ENCODE measurements at regions of chr21 and their contacts with region 1.

Region 1: DNA sequence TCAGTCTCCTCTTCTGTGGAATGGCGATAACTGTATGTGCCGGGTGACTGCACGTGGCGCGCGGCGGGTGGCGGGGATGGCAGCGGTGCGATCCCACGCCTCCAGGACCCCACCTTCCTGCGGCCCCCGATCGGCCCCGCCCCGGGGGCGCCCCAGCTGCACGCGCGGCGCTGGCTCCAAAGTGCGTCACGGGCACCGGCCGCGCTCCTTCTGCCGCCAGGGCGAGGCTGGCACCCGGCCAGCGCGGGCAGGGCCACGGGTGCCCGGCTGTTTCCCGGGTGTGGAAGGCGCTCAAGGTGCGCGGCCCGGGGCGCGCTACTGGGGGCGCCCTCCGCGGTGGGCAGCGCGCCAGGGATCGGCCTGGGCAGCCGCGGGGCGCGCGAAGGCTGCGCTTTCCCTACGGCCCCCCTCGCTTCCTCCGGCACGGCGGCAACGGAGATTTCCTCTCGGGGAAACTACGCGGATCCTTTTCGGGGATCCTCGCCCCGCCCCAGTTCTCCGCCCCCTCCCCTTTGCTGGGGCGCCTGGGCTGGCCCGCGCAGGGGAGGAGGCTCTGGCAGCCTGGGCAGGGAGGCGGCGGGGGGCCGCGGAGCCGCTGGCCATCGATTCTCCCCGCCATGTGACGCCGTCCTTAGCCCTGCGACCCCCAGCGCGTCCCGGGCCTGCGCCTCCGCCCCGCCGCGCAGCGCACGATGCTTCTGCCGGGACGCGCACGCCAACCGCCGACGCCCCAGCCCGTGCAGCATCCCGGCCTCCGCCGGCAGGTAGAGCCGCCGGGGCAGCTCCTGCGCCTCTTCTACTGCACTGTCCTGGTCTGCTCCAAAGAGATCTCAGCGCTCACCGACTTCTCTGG is at the start of gene EVA1C:
- DNase-seq: peak; percentile 75 to 86 (median 82)
- ATAC-seq: peak; percentile 29 to 78 (median 60)
- H3K4me3 ChIP-seq: peak within 1 kb of the TSS; percentile 36 to 95 (median 76)
- H3K27ac ChIP-seq: peak within 1 kb of the TSS; percentile 94 to 100 (median 99)
- H3K4me1 ChIP-seq: peaks cover 12 to 64% (median 39%) of the 10 kb centered on the region in 12 donors
- H3K27me3 ChIP-seq: no peaks in the 10 kb centered on the region
- CTCF ChIP-seq: peak in 8 of 12 donors; percentile 9 to 51 (median 28)
- POLR2A ChIP-seq: peak in 1 of 2 donors; percentile 33
- total RNA-seq, gene EVA1C: 10.1 to 44.4 (median 19.7) TPM

Region 2: DNA sequence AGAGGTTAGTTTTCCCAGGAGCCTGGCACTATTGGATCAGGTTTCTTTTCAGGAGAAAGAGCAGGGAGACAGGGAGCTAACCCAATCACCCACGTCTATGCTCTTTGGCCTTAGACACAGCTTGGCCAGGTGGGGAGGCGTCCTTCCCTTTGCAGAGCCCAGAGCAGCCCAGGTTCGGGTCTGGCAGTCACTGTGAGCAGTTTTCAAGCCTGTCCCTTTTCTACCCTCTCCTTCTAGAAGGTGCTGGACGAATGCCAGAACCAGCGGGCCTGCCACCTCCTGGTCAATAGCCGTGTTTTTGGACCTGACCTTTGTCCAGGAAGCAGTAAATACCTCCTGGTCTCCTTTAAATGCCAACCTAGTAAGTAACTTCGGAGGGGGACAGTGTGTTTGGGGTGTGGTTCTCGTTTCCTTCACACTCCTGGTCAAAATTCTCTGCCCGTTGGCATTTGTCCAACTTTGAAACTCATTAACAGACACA is 45.0 kb after region 1 on chr21:
- intact Hi-C with region 1: loop called in 7 of 10 experiments (anchors 2 to 10 kb)
- DNase-seq: peak; percentile 41 to 71 (median 52)
- ATAC-seq: peak in 3 of 4 donors; percentile 40 to 52 (median 45)
- H3K4me3 ChIP-seq: no peak overlapping the region
- H3K27ac ChIP-seq: peak overlapping the region; percentile 11 to 78 (median 60)
- H3K4me1 ChIP-seq: peaks cover 9 to 36% (median 20%) of the 10 kb centered on the region in 12 donors
- H3K27me3 ChIP-seq: no peaks in the 10 kb centered on the region
- CTCF ChIP-seq: peak in 6 of 12 donors; percentile 11 to 38 (median 15)
- POLR2A ChIP-seq: no peak

Region 3: DNA sequence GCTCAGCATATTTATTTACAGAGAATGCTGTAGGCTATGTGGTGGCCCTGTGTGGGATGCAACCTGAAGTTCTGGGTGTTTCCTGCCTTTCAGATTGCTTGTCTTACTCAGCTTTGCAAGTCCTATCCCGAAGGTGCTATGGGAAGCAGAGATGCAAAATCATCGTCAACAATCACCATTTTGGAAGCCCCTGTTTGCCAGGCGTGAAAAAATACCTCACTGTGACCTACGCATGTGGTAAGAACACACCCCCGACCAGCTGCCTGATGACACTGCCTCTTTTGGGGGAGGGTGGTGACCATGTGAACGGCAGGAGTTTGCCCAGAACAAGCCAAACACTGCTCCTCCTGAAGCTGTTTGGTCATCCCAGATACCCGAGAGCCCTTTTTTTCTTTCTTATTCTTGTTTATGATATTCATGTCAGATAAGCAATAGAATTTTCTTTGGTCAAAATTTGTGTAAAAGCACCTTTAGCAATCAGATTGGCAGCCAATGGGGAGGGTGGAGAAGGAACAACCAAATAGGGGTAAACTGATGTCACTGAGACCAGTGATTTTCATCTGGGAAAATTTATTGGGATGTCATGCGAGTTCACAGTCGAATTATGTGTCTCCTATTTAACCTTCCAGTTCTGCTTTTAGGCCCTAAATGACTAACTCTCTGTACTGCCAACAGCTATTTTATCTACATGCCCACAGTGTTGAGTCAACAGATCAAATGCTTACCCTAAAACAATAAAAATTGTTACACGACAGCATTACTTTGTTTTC is 82.7 kb after region 1 on chr21:
- intact Hi-C with region 1: loop called in 5 of 10 experiments (anchors 5 to 10 kb)
- DNase-seq: no peak
- ATAC-seq: no peak
- H3K4me3 ChIP-seq: no peak overlapping the region
- H3K27ac ChIP-seq: peak overlapping the region in 3 of 12 donors; percentile 8 to 55 (median 49)
- H3K4me1 ChIP-seq: peaks cover 6 to 53% (median 33%) of the 10 kb centered on the region in 12 donors
- H3K27me3 ChIP-seq: no peaks in the 10 kb centered on the region
- CTCF ChIP-seq: no peak
- POLR2A ChIP-seq: no peak

Region 4: GRCh38 chr21:32562426-32562825 is 150.0 kb after region 1 on chr21:
- intact Hi-C with region 1: loop called in 3 of 10 experiments (anchors 2 to 5 kb)
- DNase-seq: peak in 4 of 5 donors; percentile 58 to 62 (median 60)
- ATAC-seq: peak; percentile 55 to 84 (median 66)
- H3K4me3 ChIP-seq: no peak overlapping the region
- H3K27ac ChIP-seq: peak overlapping the region in 9 of 12 donors; percentile 5 to 70 (median 56)
- H3K4me1 ChIP-seq: peaks cover 0 to 11% (median 1%) of the 10 kb centered on the region in 12 donors
- H3K27me3 ChIP-seq: no peaks in the 10 kb centered on the region
- CTCF ChIP-seq: peak; percentile 37 to 81 (median 58)
- POLR2A ChIP-seq: no peak

Region 5: GRCh38 chr21:32612075-32612998 is 199.9 kb after region 1 on chr21 and contains the start of gene CFAP298:
- intact Hi-C with region 1: loop called in 1 of 10 experiments (anchors 5 kb)
- DNase-seq: peak; percentile 89 to 92 (median 89)
- ATAC-seq: peak; percentile 93 to 97 (median 95)
- H3K4me3 ChIP-seq: peak within 1 kb of the TSS; percentile 68 to 99 (median 86)
- H3K27ac ChIP-seq: peak within 1 kb of the TSS; percentile 80 to 98 (median 93)
- H3K4me1 ChIP-seq: peaks cover 0 to 27% (median 16%) of the 10 kb centered on the region in 12 donors
- H3K27me3 ChIP-seq: no peaks in the 10 kb centered on the region
- CTCF ChIP-seq: no peak
- POLR2A ChIP-seq: no peak
- total RNA-seq, gene CFAP298: 14.2 to 26.7 (median 20.8) TPM